ENCODE measurements at regions of chr4 and their contacts with region 1.

Region 1: GRCh38 chr4:83639849-83640493 is 104.1 kb downstream of the GPAT3 start:
- DNase-seq: peak in 4 of 5 donors; percentile 55 to 90 (median 77)
- H3K4me3 ChIP-seq: no peak overlapping the region
- H3K27ac ChIP-seq: no peak overlapping the region
- H3K4me1 ChIP-seq: no peaks in the 10 kb centered on the region
- H3K27me3 ChIP-seq: no peaks in the 10 kb centered on the region
- CTCF ChIP-seq: peak; percentile 85

Region 2: DNA sequence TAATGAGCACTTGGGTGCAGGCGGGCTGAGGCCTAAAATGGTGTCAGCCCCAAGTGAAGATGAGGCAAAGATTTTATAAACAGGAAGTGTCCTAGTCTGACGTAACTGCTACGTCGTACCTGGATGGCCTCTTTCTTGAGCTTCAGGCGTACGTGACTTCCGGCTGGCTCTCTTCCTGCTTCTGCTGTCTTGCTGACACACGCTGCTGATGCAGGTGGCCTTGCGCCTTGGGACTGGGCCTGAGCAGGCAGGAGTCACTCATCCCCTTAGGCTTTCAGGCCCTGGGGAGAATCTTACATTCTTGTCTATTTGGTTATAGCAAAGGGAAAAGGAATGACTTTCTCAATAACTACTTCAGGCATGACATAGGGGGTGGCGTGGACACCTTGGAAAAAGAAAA is 135.0 kb before region 1 on chr4:
- intact Hi-C with region 1: loop called (anchors 5 kb)
- DNase-seq: no peak
- H3K4me3 ChIP-seq: no peak overlapping the region
- H3K27ac ChIP-seq: no peak overlapping the region
- H3K4me1 ChIP-seq: no peaks in the 10 kb centered on the region
- H3K27me3 ChIP-seq: no peaks in the 10 kb centered on the region
- CTCF ChIP-seq: no peak

Region 3: DNA sequence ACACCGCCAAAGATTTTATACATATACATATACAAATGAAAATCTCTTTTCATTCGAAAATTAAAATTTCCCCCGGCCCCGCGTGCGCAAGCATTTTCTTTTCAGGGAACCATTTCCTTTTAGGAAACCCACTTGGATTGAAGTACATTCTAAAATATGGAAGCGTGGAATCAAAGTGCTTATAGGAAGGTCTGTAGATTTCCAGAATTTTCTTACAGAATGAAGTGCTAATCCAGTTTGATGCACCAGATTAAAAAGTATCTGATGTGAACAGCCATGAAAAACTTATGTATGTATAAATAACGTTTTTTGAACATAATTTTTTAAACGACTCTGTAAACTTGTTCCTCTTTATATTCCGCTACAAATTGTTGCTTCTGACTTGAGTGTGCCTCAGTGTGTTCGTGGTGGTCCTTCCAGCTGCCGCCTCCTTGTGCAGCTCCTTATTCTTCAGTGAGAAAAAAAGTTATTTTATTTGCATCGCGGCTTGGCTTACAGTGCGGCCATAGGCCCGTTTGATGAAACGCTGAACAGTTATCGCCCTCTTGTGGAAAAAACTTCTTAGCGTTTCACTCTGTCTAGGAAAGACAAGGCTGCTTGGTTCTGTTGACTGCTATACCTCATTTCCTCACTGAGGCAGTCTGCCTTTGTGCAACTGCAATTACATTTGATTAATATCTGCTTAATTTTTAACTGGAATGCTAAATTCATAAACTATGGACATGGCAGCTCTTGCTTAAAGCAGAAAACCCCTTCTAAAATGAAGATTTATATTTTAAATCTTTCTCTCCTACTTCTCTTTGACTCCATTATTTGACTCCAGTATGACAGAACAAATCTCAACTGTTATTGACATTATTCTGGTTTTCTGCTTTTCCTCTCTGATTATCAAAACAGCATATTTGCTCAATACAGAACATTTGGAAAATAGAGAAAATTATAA is 863.8 kb after region 1 on chr4:
- intact Hi-C with region 1: loop called (anchors 10 kb)
- DNase-seq: peak in 4 of 5 donors; percentile 67 to 93 (median 82)
- H3K4me3 ChIP-seq: no peak overlapping the region
- H3K27ac ChIP-seq: no peak overlapping the region
- H3K4me1 ChIP-seq: no peaks in the 10 kb centered on the region
- H3K27me3 ChIP-seq: peaks cover 50% of the 10 kb centered on the region
- CTCF ChIP-seq: peak; percentile 66